ENCODE measurements at regions of chr6 and their contacts with region 1.

Region 1: GRCh38 chr6:158793432-158793831 is 25.7 kb downstream of the EZR start:
- DNase-seq: no peak
- ATAC-seq: no peak
- H3K4me3 Mint-ChIP-seq: no peak overlapping the region
- H3K27ac Mint-ChIP-seq: no peak overlapping the region
- H3K4me1 Mint-ChIP-seq: peaks cover 82% of the 10 kb centered on the region
- H3K27me3 Mint-ChIP-seq: no peaks in the 10 kb centered on the region

Region 2: DNA sequence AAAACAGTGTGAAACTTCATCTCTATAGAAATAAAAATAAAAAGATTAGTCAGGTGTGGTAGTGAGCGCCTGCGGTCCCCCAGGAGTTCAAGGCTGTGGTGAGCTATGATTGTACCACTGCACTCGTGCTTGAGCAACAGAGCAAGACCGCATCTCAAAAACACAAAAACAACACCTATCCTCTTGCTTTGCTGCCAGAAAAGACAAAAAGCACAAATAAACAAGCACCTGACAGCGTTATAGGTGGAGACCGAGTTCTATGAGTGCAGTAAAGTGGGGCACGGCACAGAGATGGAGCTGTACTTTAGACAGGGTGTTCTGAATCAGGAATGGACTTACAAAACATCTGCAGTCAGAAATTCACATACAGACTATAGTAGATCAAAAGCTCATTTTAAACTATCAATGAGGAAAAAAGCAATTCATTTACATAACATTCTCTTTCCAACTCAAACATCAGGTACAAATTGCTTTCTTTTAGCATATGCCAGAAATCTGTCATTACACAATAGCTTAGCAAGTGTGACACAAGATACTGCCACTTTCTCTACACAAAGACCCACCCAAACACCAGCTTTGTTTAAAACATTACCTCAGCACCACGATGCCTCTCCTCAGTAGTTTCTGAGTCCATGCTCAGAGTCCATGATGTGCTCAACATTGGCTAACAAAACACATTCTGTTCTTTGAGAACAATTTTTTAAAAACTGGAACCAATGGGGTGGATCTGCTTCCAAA is 15.7 kb after region 1 on chr6:
- CTCF ChIA-PET with region 1: interaction called, 11 read pairs
- POLR2A ChIA-PET with region 1: interaction called, 9 read pairs
- DNase-seq: no peak
- ATAC-seq: peak; percentile 26
- H3K4me3 Mint-ChIP-seq: peak overlapping the region; percentile 12
- H3K27ac Mint-ChIP-seq: peak overlapping the region; percentile 59
- H3K4me1 Mint-ChIP-seq: peaks cover 92% of the 10 kb centered on the region
- H3K27me3 Mint-ChIP-seq: no peaks in the 10 kb centered on the region

Measured in activated CD8-positive, alpha-beta T cell treated with anti-CD3 and anti-CD28 coated beads, Interleukin-2, amount 10 ng/mL, durations not matched to agents 7 days and 5 days (primary cell).